Activated CD4-positive, alpha-beta T cell treated with anti-CD3 and anti-CD28 coated beads, Interleukin-2, amount 10 ng/mL, durations not matched to agents 24 days and 14 days (primary cell): ENCODE measurements at regions of chr19 and their contacts with region 1.

Region 1: GRCh38 chr19:35545001-35545911 is at the start of gene TMEM147:
- DNase-seq: peak; percentile 96
- H3K4me3 Mint-ChIP-seq: peak within 1 kb of the TSS; percentile 97
- H3K27ac Mint-ChIP-seq: peak within 1 kb of the TSS; percentile 96
- H3K4me1 Mint-ChIP-seq: peaks cover 29% of the 10 kb centered on the region
- H3K27me3 Mint-ChIP-seq: no peaks in the 10 kb centered on the region
- total RNA-seq, gene TMEM147: 132 and 134 TPM in 2 replicates

Region 2: DNA sequence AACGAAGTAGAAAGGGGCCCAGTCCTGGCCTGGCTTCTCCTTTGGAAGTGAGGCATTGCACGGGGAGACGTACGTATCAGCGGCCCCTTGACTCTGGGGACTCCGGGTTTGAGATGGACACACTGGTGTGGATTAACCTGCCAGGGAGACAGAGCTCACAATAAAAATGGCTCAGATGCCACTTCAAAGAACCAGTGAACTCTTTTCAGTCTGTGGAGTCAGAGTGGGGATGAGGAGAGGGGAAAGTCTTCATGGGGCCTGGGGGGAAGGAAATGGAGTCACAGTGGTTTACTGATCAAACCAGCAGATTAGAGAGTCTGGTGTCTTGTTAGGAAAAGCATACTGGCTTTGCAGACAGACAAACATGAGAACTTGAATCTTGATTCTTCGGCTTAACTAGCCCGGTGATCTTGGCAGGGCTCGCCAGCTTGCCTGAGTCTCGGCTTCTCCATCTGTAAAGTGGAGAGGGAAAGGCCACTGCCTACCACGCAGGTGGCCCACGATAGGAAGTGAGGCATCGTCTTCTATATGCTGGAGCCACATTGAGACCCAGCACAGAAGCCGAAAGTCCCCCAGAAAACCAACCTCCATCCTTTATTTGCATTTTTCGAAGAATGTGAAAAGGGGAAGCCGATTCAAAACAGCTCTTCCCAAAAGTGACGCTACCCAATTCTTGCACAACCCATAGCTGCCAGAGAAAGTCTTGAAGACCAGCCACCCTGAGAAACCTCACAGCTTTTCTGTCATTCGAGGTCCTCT is 197.9 kb before region 1 on chr19 and contains the start of gene FFAR1:
- intact Hi-C with region 1: loop called (anchors 2 kb)
- DNase-seq: peak; percentile 83
- H3K4me3 Mint-ChIP-seq: peak within 1 kb of the TSS; percentile 79
- H3K27ac Mint-ChIP-seq: peak within 1 kb of the TSS; percentile 98
- H3K4me1 Mint-ChIP-seq: peaks cover 43% of the 10 kb centered on the region
- H3K27me3 Mint-ChIP-seq: peaks cover 8% of the 10 kb centered on the region
- total RNA-seq, gene FFAR1: 0.12 and 0.14 TPM in 2 replicates

Region 3: DNA sequence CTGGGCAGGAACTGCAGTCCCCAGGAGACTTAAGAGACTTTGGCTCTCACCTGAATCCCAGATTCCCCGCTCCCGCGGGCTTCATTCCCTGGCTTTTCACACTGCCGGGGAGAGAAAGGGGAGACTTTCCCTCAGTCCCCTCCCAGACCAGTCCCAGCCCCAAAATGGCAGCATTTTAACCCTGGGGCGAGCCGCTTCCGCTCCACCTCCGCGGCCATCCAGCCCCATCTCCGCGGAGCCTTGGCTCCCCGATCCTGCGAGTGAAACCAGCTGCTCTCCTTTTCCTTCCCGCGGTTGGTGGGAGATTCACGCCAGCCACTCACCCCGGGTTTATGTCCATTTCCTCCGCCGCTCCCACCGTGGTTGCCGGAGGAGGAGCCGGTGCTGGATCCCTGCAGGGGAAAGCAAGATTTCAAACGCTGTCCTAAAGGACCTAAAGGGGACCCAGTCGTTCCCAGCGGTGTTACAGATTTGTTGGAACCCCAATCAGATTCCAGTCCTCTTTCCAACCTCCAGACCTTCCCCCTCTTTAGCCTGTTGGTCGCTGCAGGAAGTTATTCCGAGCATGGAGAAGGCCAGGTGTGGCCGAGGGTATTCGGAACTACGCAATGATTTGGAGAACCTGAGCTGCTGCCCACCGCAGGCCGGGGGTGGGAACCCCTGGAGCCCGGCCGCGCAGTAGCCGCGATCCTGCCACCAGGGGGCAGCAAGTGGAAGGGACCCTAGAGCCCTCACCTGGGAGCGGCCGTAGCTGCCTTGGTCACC is 35.2 kb before region 1 on chr19:
- intact Hi-C with region 1: loop called (anchors 5 kb)
- DNase-seq: peak; percentile 91
- H3K4me3 Mint-ChIP-seq: peak overlapping the region; percentile 62
- H3K27ac Mint-ChIP-seq: no peak overlapping the region
- H3K4me1 Mint-ChIP-seq: peaks cover 9% of the 10 kb centered on the region
- H3K27me3 Mint-ChIP-seq: peaks cover 60% of the 10 kb centered on the region

Region 4: DNA sequence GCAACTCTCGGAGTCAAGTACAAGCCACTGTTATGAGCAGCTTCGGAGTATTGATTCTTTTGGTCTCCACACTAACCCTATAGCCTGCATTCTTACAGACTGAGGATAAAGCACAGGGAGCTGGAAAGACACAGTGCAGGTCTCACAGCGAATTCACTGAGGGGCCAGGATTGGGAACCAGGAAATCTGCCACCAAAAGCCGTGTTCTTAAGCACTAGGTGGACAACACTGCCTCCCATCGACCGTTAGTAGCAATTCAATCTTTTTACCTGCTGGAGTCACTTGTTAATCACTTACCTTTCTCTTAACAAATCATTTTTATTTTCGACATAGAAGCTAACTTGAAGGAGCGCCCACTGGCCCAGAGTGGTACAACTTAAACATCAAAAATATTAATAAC is 47.0 kb after region 1 on chr19:
- intact Hi-C with region 1: loop called (anchors 5 kb)
- DNase-seq: peak; percentile 68
- H3K4me3 Mint-ChIP-seq: no peak overlapping the region
- H3K27ac Mint-ChIP-seq: no peak overlapping the region
- H3K4me1 Mint-ChIP-seq: peaks cover 7% of the 10 kb centered on the region
- H3K27me3 Mint-ChIP-seq: no peaks in the 10 kb centered on the region

Region 5: DNA sequence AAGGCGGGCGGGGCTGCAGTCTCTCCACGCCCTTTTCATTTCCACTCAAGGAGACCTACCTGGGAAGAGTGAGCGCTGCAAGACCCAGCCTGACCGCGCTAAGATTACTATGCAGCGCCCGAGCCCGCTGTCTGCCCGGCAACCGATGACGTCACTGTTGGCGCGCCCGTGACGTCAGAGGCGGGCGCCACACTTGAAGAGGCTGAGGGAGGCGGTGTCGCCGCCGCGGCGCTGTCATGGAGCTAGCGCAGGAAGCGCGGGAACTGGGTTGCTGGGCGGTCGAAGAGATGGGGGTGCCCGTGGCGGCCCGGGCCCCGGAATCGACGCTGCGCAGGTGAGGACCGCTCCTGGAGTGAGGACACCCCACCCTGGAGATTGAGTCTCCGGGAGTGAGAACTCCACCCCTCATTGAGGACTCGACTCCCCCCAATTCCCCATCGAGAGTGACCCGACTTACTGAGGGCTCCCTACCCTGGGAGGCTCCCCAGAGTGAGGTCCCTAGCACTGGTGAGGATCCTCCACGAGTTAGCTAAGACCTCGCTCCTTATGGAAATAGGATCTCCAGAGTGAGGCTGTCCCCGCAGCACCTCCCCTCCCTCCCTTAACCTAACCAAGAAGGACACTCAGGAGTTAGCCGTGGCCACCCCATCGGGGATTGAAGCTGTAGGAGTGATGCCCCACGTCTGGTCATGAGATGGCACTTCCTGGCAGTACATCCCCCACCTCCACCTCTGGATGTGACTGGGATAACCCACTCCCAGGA is 67.5 kb after region 1 on chr19 and contains the start of gene HAUS5:
- intact Hi-C with region 1: loop called (anchors 1 kb)
- DNase-seq: peak; percentile 99
- H3K4me3 Mint-ChIP-seq: peak within 1 kb of the TSS; percentile 89
- H3K27ac Mint-ChIP-seq: peak within 1 kb of the TSS; percentile 92
- H3K4me1 Mint-ChIP-seq: peaks cover 28% of the 10 kb centered on the region
- H3K27me3 Mint-ChIP-seq: no peaks in the 10 kb centered on the region
- total RNA-seq, gene HAUS5: 45.8 TPM in 2 replicates

Region 6: GRCh38 chr19:35628565-35629331 is 83.5 kb after region 1 on chr19 and contains the start of gene RBM42:
- intact Hi-C with region 1: loop called (anchors 5 kb)
- DNase-seq: peak; percentile 99
- H3K4me3 Mint-ChIP-seq: peak within 1 kb of the TSS; percentile 99
- H3K27ac Mint-ChIP-seq: peak within 1 kb of the TSS; percentile 100
- H3K4me1 Mint-ChIP-seq: peaks cover 23% of the 10 kb centered on the region
- H3K27me3 Mint-ChIP-seq: peaks cover 2% of the 10 kb centered on the region
- total RNA-seq, gene RBM42: 114 and 115 TPM in 2 replicates

Region 7: GRCh38 chr19:35648017-35648961 is 103.0 kb after region 1 on chr19 and contains the start of gene COX6B1:
- intact Hi-C with region 1: loop called (anchors 1 kb)
- DNase-seq: peak; percentile 98
- H3K4me3 Mint-ChIP-seq: peak within 1 kb of the TSS; percentile 96
- H3K27ac Mint-ChIP-seq: peak within 1 kb of the TSS; percentile 88
- H3K4me1 Mint-ChIP-seq: peaks cover 31% of the 10 kb centered on the region
- H3K27me3 Mint-ChIP-seq: no peaks in the 10 kb centered on the region
- total RNA-seq, gene COX6B1: 451 and 472 TPM in 2 replicates